ENCODE measurements at regions of chr19 and their contacts with region 1.

Region 1: GRCh38 chr19:2249880-2250764 is 999 bp downstream of the AMH start:
- DNase-seq: no peak
- H3K4me3 ChIP-seq: no peak overlapping the region
- H3K27ac ChIP-seq: no peak overlapping the region
- H3K4me1 ChIP-seq: peaks cover 0 to 44% (median 38%) of the 10 kb centered on the region in 4 donors
- H3K27me3 ChIP-seq: peaks cover 3 to 79% of the 10 kb centered on the region in 2 donors
- CTCF ChIP-seq: no peak

Region 2: DNA sequence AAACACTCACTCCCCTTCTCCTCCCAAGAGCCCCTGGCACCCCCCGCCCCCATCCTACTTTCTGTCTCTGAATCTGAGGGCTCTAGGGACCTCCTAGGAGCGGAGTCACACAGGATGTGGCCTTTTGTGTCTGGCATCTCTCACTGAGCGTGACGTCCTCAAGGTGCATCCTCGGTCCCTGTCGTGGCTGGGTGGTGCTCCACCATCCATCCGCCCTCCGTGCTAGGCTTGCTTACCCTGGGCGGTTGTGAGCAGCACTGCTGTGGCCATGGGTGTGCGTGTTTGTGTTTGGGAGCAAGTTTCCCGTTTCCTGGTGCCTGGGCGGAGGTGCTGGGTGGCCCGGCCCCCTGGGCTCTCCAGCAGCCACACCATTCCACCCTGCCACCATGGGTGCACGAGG is 26.2 kb before region 1 on chr19:
- intact Hi-C with region 1: loop called (anchors 2 kb)
- DNase-seq: no peak
- H3K4me3 ChIP-seq: no peak overlapping the region
- H3K27ac ChIP-seq: no peak overlapping the region
- H3K4me1 ChIP-seq: no peaks in the 10 kb centered on the region
- H3K27me3 ChIP-seq: no peaks in the 10 kb centered on the region
- CTCF ChIP-seq: no peak

Measured in tibial artery (tissue), 4 donors.